Activated CD4-positive, alpha-beta T cell treated with anti-CD3 and anti-CD28 coated beads for 36 hours (primary cell): ENCODE measurements at regions of chr6 and their contacts with region 1.

Region 1: GRCh38 chr6:33200219-33201146 is at the starts of genes RXRB and SLC39A7:
- DNase-seq: peak; percentile 100
- ATAC-seq: peak; percentile 64
- H3K4me3 Mint-ChIP-seq: peak within 1 kb of the TSS; percentile 100
- H3K27ac Mint-ChIP-seq: peak within 1 kb of the TSS; percentile 99
- H3K4me1 Mint-ChIP-seq: peaks cover 64% of the 10 kb centered on the region
- H3K27me3 Mint-ChIP-seq: no peaks in the 10 kb centered on the region
- total RNA-seq, gene RXRB: 41.0 to 45.4 TPM
- total RNA-seq, gene SLC39A7: 33.0 to 41.8 TPM

Region 2: DNA sequence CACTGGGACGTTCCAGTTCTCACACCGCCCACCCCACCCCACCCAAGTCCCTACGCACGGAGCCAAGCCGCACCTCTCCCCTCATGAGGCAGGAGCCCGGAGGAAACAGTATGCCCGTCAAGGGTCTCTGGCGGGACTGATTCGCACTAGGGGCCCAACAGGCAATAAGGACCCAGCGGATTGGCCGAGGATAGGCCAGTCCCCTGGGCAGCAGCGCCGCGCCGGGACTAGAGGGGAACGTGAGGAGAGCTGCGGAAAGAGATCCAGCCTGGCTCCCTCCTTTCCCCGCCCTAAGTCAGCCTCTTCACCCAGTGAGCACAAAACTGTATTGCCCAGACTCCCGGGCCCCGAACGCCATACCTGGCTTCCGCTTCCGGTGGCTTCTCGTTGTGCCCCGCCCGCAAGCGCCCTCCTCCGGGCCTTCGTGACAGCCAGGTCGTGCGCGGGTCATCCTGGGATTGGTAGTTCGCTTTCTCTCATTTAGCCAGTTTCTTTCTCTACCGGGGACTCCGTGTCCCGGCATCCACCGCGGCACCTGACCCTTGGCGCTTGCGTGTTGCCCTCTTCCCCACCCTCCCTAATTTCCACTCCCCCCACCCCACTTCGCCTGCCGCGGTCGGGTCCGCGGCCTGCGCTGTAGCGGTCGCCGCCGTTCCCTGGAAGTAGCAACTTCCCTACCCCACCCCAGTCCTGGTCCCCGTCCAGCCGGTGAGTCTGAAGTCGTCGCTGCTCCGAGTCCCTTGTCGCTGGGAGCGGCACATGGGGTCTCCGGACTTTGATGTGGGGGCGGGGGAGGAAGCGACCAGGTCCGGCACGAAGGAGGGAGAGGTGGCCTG is 1534.8 kb before region 1 on chr6 and contains the start of gene CSNK2B:
- CTCF ChIA-PET with region 1: no interaction called
- POLR2A ChIA-PET with region 1: no interaction called
- intact Hi-C with region 1: loop called in 1 of 2 experiments (anchors 10 kb)
- DNase-seq: peak; percentile 99
- ATAC-seq: peak; percentile 89
- H3K4me3 Mint-ChIP-seq: peak within 1 kb of the TSS; percentile 99
- H3K27ac Mint-ChIP-seq: peak within 1 kb of the TSS; percentile 99
- H3K4me1 Mint-ChIP-seq: peaks cover 66% of the 10 kb centered on the region
- H3K27me3 Mint-ChIP-seq: no peaks in the 10 kb centered on the region
- total RNA-seq, gene CSNK2B: 239 to 346 TPM

Region 3: DNA sequence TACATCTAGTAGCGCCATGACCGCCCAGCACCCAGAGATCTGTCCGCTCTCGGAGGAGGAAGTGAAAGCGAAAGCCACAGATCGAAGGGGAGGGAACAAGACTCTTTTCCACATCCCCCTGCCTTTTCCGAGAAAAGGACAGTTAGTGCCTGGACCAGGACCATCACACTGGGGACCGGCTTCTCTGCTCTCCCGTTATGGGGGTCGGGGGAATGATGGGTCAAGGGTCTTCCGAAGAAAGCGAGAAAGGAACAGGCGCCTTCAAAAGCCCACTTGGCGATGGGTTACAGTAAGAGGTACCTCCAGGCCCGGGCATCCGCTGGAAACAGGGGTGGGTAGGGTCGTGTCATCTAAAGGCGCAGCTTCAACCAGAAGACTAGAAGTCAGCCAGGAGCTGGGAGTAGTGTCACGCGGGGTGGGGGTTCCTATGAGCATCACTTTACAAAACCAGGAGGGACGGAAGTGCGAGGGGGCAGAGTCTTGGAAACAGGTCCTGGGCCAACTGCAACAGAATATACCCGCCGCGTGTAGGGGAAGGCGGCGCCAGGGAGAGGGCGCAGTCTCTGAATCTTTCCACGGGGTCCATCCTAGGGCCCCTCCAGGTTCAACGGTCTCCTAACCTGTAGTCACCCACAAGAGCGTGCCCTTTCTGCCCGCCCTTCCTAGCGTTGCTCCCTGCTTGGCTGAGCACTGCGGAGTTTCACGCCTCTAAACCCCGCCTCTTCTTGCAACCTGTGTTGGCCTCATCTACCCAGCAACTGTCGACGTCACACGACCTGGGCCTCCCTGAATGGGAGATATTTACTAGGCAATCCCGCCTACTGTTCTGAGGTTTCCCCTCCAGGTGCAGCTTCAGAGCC is 356.3 kb before region 1 on chr6 and contains the start of gene PSMB8:
- CTCF ChIA-PET with region 1: no interaction called
- POLR2A ChIA-PET with region 1: interaction called, 3 read pairs
- intact Hi-C with region 1: loop called in 1 of 2 experiments (anchors 2 kb)
- DNase-seq: peak; percentile 99
- ATAC-seq: peak; percentile 73
- H3K4me3 Mint-ChIP-seq: peak within 1 kb of the TSS; percentile 95
- H3K27ac Mint-ChIP-seq: peak within 1 kb of the TSS; percentile 97
- H3K4me1 Mint-ChIP-seq: peaks cover 66% of the 10 kb centered on the region
- H3K27me3 Mint-ChIP-seq: no peaks in the 10 kb centered on the region
- total RNA-seq, gene PSMB8: 238 to 338 TPM

Region 4: GRCh38 chr6:33139596-33140206 is 60.8 kb before region 1 on chr6:
- CTCF ChIA-PET with region 1: interaction called, 10 read pairs
- POLR2A ChIA-PET with region 1: no interaction called
- intact Hi-C with region 1: no loop called
- DNase-seq: no peak
- ATAC-seq: no peak
- H3K4me3 Mint-ChIP-seq: no peak overlapping the region
- H3K27ac Mint-ChIP-seq: no peak overlapping the region
- H3K4me1 Mint-ChIP-seq: no peaks in the 10 kb centered on the region
- H3K27me3 Mint-ChIP-seq: peaks cover 23% of the 10 kb centered on the region

Region 5: DNA sequence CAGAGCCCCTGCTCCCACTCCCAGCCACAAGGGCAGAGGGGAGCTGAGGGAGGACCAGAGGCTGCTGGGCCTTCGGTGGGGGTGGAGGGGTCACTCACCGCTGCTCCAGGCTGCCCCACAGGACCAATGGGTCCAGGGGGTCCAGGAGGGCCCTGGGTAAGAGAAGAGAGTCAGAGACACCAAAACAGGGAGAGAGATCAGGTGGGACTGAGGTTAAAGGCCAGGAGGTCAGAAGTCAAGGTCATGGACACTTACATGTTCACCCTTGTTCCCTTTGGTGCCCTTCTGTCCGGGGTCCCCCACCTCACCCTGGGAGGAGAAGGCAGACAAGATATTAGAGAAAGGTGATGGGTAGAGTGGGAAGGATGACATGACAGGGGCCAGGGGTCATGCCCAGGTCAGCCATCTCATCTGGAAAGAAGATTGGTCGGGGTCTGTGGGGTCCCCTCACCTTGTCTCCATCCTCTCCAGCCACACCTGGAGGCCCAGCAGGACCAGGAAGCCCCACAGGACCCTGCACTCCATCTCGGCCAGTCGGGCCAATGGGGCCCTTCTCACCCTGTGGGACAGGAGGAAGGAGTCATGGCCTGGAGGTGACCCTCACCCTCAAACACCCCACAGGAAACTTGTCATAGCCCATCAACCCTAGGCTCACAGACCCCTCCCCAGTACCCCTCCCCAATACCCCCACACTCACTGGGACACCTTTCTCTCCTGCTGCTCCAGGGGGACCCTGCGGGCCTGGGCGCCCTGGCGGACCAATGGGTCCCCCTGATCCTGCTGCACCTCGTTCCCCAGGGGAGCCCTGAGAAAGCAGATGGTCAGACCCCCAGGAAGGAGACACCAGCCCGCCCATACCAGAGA is 29.2 kb before region 1 on chr6:
- CTCF ChIA-PET with region 1: no interaction called
- POLR2A ChIA-PET with region 1: no interaction called
- intact Hi-C with region 1: no loop called
- DNase-seq: no peak
- ATAC-seq: no peak
- H3K4me3 Mint-ChIP-seq: no peak overlapping the region
- H3K27ac Mint-ChIP-seq: no peak overlapping the region
- H3K4me1 Mint-ChIP-seq: no peaks in the 10 kb centered on the region
- H3K27me3 Mint-ChIP-seq: no peaks in the 10 kb centered on the region

Region 6: DNA sequence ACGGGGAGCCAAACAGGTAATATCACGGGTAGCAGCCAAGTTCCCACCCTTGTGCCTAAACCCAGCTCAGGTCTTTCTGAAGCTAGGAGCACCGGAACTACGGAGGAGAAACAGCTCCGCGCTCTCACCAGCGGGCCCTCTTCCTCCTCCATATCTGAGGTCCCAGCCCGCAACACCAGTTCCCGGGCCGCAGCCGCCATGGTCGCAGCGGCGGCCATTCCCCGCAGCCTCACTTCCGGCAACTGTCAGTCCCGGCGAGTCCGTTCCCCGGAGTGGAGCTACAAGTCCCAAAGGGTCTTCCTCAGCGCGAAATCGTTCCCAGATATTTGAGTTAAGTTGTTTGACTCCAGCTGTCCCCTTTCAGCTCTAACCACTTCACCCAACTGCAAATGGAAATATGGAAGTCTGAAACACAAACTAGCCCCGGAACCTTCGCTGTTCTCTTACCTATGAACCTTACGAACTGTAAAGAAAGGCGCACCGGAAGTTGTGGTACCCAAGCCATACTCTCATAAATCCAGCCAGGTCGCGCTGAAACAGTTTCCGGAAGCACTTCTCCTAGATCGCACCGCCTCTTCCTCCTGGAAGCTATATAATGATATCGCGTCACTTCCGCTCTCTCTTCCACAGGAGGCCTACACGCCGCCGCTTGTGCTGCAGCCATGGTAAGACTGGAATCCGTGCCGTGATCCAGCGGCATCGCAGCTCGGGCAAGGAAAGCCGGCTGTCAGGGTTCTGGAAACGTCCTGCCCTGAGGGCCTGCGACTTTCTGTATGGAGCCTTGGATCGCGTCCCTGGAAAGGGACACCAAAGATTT is 71.2 kb after region 1 on chr6 and contains the starts of genes RPS18 and VPS52:
- CTCF ChIA-PET with region 1: interaction called, 3 read pairs
- POLR2A ChIA-PET with region 1: no interaction called
- intact Hi-C with region 1: loop called (anchors 1 kb)
- DNase-seq: peak; percentile 94
- ATAC-seq: peak; percentile 92
- H3K4me3 Mint-ChIP-seq: peak within 1 kb of the TSS; percentile 91
- H3K27ac Mint-ChIP-seq: peak within 1 kb of the TSS; percentile 100
- H3K4me1 Mint-ChIP-seq: peaks cover 47% of the 10 kb centered on the region
- H3K27me3 Mint-ChIP-seq: no peaks in the 10 kb centered on the region
- total RNA-seq, gene RPS18: 2,706 to 4,631 TPM
- total RNA-seq, gene VPS52: 35.6 to 45.2 TPM

Region 7: GRCh38 chr6:33391278-33391921 is 190.9 kb after region 1 on chr6 and contains the start of gene KIFC1:
- CTCF ChIA-PET with region 1: no interaction called
- POLR2A ChIA-PET with region 1: no interaction called
- intact Hi-C with region 1: loop called in 1 of 2 experiments (anchors 1 kb)
- DNase-seq: peak; percentile 100
- ATAC-seq: peak; percentile 90
- H3K4me3 Mint-ChIP-seq: peak within 1 kb of the TSS; percentile 88
- H3K27ac Mint-ChIP-seq: peak within 1 kb of the TSS; percentile 96
- H3K4me1 Mint-ChIP-seq: peaks cover 37% of the 10 kb centered on the region
- H3K27me3 Mint-ChIP-seq: no peaks in the 10 kb centered on the region
- total RNA-seq, gene KIFC1: 86.0 to 89.3 TPM

Region 8: DNA sequence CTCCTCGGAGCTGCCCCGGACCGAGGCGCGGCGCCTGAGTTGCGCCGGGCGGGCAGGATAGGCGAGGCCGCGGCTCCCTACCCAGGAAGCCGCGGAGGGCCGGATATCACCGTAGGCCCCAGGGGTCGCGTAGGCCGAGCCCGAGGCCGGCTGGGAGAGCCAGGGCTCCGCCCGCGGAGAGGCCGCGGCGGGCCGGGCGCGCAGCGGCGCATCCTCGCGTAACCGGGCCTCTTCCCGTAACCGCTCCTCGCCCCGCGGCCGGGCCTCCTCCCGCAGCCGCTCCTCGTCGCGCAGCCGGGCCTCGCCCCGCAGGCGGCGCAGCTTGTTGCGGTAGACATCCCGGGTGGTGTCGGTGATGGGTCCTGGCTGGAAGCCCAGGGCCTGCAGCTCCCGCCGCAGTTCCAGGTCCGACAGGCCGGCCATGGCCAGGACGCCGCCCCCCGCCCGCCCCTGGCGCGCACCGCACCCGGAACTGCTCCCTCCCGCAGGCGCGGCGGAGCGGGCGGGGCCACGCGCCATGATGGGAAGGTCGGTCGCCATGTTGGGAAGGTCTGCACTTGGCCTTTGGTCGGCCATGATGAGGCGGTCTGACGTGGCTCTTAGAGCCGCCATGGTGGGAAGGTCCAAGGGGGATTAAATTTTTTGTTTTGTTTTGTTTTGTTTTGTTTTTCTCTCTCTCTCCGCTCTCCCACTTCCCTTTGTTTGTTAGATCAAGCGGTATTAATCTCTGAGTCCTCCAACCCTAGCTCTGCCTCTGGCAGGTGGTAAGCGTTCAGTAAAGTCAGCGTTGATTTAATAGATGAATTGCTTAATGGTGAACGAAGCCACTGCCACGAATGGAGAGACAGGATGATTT is 588.4 kb after region 1 on chr6 and contains the start of gene LEMD2:
- CTCF ChIA-PET with region 1: no interaction called
- POLR2A ChIA-PET with region 1: no interaction called
- intact Hi-C with region 1: loop called in 1 of 2 experiments (anchors 2 kb)
- DNase-seq: peak; percentile 93
- ATAC-seq: peak; percentile 87
- H3K4me3 Mint-ChIP-seq: peak within 1 kb of the TSS; percentile 96
- H3K27ac Mint-ChIP-seq: peak within 1 kb of the TSS; percentile 99
- H3K4me1 Mint-ChIP-seq: peaks cover 47% of the 10 kb centered on the region
- H3K27me3 Mint-ChIP-seq: no peaks in the 10 kb centered on the region
- total RNA-seq, gene LEMD2: 55.2 to 61.5 TPM